Aorta (tissue), 5 donors: ENCODE measurements at regions of chr10 and their contacts with region 1.

Region 1: DNA sequence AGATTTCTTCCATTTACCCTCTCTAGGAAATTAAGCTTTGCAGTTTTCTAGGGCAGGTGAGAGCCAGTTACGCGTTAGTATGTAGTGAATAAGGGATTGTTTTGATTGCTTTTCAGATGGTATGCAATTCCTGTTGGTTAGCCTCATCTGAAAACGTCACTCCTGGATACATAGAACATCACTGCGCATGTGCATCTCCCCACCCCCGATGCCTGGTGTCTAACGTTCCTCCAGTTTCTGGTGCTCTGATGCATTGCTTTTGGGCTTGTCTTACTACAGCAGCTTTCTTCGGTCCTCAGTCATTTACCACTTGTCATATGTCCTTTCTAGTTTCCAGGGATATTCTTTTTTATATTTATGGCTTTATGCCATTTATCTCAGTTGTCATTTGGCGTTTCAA is 22.5 kb downstream of the MLLT10 start:
- DNase-seq: no peak
- ATAC-seq: no peak
- H3K4me3 ChIP-seq: no peak overlapping the region
- H3K27ac ChIP-seq: no peak overlapping the region
- H3K4me1 ChIP-seq: peaks cover 0 to 4% of the 10 kb centered on the region in 2 donors
- H3K27me3 ChIP-seq: no peaks in the 10 kb centered on the region

Region 2: GRCh38 chr10:21495752-21496342 is 60.7 kb before region 1 on chr10:
- intact Hi-C with region 1: no loop called
- DNase-seq: peak; percentile 86 to 96
- ATAC-seq: peak; percentile 94
- H3K4me3 ChIP-seq: peak overlapping the region; percentile 72 to 90
- H3K27ac ChIP-seq: no peak overlapping the region
- H3K4me1 ChIP-seq: no peaks in the 10 kb centered on the region
- H3K27me3 ChIP-seq: no peaks in the 10 kb centered on the region

Region 3: DNA sequence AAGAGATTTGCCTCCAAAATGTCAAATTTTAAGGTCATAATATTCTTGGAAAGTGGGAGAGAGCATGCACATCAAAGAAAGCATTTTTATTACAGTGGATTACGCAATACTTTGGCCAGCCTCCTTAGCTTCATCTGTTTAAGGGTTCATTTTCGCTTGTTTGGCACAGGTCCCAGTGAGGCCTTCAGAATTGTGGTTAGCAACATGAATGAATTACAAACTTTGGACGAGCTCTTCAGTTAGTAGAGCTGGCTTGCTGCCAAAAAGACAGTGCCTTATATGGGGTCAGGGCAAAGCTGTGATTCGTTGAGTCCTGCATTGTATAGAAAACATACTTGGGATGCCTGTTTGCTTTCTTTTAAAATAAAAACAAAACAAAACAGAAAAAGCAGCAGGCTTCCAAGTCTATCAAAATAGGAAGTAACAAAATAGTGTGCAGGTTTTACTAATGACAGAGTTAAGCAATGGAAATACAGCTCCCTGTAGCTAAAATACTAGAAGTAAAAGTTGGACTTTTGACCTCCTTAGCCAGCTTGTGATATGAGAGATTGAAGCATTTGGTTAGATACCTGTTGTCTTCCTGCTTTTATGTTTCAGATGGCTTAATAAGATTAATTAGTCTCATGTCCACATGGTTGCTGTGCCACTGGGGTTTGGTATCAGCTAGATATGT is 168.3 kb after region 1 on chr10:
- intact Hi-C with region 1: loop called in 1 of 2 experiments (anchors 10 kb)
- DNase-seq: peak; percentile 79 to 93
- ATAC-seq: peak; percentile 88
- H3K4me3 ChIP-seq: no peak overlapping the region
- H3K27ac ChIP-seq: no peak overlapping the region
- H3K4me1 ChIP-seq: no peaks in the 10 kb centered on the region
- H3K27me3 ChIP-seq: no peaks in the 10 kb centered on the region